ENCODE measurements at regions of chr3 and their contacts with region 1.

Region 1: DNA sequence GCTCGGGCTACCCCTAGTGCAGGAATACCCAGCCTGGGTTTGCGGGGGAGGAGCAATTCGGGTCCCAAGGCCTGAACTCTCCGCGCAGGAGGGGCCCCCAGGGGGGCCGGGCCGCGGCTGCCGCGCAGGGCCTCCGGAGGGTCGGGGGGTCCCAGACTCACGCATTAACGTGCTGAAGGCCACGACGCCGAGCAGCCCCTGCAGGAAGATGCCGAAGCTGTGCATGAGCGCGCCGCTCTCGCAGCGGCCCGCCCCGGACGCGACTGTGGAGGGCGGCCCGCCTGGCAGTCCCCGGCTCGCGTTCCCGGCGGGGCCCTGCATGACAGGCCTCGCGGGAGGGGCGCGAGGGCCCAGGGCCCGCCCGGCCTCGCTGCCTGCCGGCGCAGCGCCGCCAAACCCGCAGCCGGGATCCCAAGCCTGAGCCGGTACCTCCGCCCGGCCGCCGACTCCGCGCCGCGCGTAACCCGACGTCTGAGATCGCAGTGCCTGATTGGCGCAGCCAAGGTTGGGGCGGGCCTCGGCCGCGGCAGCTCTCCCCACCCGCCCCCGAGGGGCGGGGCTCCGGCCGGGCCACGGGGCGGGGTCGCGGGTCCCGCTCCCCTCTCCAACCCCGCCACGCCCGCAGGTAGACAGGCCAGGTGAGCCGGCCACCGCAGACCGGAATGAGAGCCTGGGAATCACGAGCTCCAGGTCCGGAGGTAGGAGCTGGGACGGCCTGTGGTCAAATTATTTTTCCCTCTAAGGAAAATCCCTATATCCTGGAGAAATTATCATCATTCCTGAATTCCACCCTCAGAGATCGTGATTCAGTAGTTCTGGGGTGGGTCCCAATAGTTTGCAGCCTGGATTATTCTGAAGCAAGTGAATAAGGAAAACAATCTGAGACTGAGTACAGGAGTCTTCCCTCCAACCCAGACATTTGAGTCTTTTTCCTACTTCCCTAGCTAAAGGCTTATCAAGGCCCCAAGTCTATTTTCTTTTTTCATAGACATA is at the start of gene STIMATE:
- DNase-seq: peak; percentile 71 to 94 (median 86)
- ATAC-seq: peak; percentile 93
- H3K4me3 ChIP-seq: peak within 1 kb of the TSS; percentile 70 to 85
- H3K4me3 Mint-ChIP-seq: peak within 1 kb of the TSS; percentile 90
- H3K27ac ChIP-seq: peak within 1 kb of the TSS; percentile 23 to 49
- H3K27ac Mint-ChIP-seq: peak within 1 kb of the TSS; percentile 80
- H3K4me1 ChIP-seq: peaks cover 22% of the 10 kb centered on the region
- H3K4me1 Mint-ChIP-seq: peaks cover 48% of the 10 kb centered on the region
- H3K27me3 ChIP-seq: no peaks in the 10 kb centered on the region
- H3K27me3 Mint-ChIP-seq: no peaks in the 10 kb centered on the region
- CTCF ChIP-seq: no peak
- total RNA-seq, gene STIMATE: 29.1 to 35.9 TPM

Region 2: GRCh38 chr3:52770496-52771333 is 126.7 kb before region 1 on chr3 and contains the start of gene NEK4:
- CTCF ChIA-PET with region 1: no interaction called
- POLR2A ChIA-PET with region 1: interaction called, 6 read pairs
- intact Hi-C with region 1: loop called in 1 of 2 experiments (anchors 10 kb)
- DNase-seq: peak; percentile 49 to 92 (median 84)
- ATAC-seq: peak; percentile 89
- H3K4me3 ChIP-seq: peak within 1 kb of the TSS; percentile 60 to 81
- H3K4me3 Mint-ChIP-seq: peak within 1 kb of the TSS; percentile 98
- H3K27ac ChIP-seq: peak within 1 kb of the TSS; percentile 42 to 68
- H3K27ac Mint-ChIP-seq: peak within 1 kb of the TSS; percentile 93
- H3K4me1 ChIP-seq: peaks cover 9% of the 10 kb centered on the region
- H3K4me1 Mint-ChIP-seq: peaks cover 19% of the 10 kb centered on the region
- H3K27me3 ChIP-seq: no peaks in the 10 kb centered on the region
- H3K27me3 Mint-ChIP-seq: no peaks in the 10 kb centered on the region
- CTCF ChIP-seq: no peak
- total RNA-seq, gene NEK4: 5.1 to 5.6 TPM

Region 3: DNA sequence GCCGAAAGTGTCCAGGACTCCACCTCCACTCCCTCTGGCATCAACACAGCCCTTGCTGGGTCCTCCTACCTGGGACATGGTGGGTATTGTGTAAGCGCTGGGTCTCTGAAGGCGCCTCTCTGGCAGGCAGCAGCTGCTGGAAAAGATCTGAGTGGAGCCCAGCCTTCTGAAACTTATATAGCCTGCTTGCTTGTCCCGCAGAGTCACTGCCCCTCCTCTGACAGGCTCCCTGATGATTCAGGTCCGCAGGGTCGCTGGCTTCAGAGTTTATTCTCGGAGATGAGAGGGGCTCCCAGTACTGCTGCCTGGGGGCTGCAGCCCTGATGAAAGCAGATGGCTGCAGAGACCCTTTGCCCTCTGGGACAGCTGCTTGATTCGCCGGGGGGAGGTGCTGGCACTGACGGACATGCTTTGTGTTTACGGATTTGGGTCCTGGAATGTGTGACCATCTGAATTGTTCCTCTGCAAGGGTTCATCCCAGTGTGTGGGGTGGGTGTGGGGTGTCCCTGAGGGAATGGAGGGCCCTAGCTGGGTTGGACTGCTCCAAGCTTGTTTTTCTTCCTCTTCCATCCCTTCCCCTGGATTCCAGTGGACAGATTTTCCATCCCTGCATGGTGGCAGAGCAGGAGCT is 62.4 kb before region 1 on chr3 and contains the start of gene MUSTN1:
- CTCF ChIA-PET with region 1: no interaction called
- POLR2A ChIA-PET with region 1: no interaction called
- intact Hi-C with region 1: no loop called
- DNase-seq: no peak
- ATAC-seq: no peak
- H3K4me3 ChIP-seq: no peak within 1 kb of the TSS
- H3K4me3 Mint-ChIP-seq: no peak within 1 kb of the TSS
- H3K27ac ChIP-seq: no peak within 1 kb of the TSS
- H3K27ac Mint-ChIP-seq: no peak within 1 kb of the TSS
- H3K4me1 ChIP-seq: peaks cover 21% of the 10 kb centered on the region
- H3K4me1 Mint-ChIP-seq: peaks cover 25% of the 10 kb centered on the region
- H3K27me3 ChIP-seq: no peaks in the 10 kb centered on the region
- H3K27me3 Mint-ChIP-seq: no peaks in the 10 kb centered on the region
- CTCF ChIP-seq: no peak
- total RNA-seq, gene MUSTN1: 3.4 to 6.7 TPM

Region 4: DNA sequence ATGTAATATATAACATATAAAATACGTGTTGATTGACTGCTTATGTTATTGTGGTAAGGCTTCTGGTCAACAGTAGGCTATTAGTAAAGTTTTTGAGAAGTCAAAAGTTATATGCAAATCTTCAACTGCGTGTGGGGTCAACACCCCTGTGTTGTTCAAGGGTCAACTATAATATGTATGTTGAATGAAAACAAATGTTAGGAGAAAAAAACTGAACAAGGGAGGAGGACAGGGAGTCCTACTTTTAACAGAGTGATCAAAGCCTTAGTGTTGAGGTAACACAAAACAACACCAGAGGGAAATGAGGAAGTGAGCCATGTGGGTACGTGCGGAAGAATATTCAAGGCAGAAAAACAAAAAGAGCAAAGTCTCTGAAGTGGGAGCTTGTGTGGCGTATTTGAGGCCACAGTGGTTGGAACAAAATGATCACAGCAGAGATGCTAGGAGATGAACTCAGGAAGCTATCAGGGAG is 85.9 kb after region 1 on chr3:
- CTCF ChIA-PET with region 1: no interaction called
- POLR2A ChIA-PET with region 1: interaction called, 4 read pairs
- intact Hi-C with region 1: loop called in 1 of 2 experiments (anchors 1 kb)
- DNase-seq: peak; percentile 10 to 84 (median 58)
- ATAC-seq: peak; percentile 86
- H3K4me3 ChIP-seq: no peak overlapping the region
- H3K4me3 Mint-ChIP-seq: peak overlapping the region; percentile 68
- H3K27ac ChIP-seq: peak overlapping the region; percentile 26 to 66
- H3K27ac Mint-ChIP-seq: peak overlapping the region; percentile 87
- H3K4me1 ChIP-seq: peaks cover 38% of the 10 kb centered on the region
- H3K4me1 Mint-ChIP-seq: peaks cover 46% of the 10 kb centered on the region
- H3K27me3 ChIP-seq: no peaks in the 10 kb centered on the region
- H3K27me3 Mint-ChIP-seq: no peaks in the 10 kb centered on the region
- CTCF ChIP-seq: no peak

Region 5: DNA sequence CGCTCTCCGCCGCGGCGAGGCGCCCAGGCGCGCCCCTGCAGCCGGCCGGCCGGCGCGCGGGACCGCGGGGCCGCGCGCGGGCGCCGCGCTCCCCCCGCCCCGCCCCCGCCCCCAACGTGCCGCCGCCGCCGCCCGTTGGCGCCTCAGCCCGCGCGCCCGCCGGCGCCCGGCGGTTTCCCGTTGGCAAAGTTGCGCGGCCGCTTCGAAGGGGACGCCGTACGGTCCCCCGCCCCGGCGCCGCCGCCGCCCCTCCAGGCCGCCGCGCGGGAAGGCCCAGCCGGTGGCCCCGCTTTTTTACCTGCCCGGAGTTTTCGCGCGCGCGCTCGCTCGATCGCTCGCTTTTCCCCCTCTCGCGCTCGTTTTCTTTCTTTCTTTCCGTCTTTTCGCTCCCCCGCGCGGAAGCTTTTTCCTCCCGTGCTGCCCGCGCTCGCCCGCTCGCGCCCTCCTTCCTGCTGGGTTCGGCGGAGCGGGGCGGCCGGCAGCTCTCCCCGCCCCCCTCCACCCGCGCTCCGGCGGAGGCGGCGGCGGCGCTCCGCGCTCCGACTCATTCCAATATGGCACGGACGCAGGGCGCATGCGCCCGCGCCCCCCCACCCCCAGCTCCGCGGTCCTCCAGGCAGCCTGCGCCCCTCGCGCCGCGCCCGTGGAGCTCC is 148.2 kb after region 1 on chr3 and contains the start of gene SFMBT1:
- CTCF ChIA-PET with region 1: interaction called, 3 read pairs
- POLR2A ChIA-PET with region 1: no interaction called
- intact Hi-C with region 1: loop called (anchors 1 to 2 kb)
- DNase-seq: peak; percentile 52 to 91 (median 78)
- ATAC-seq: peak; percentile 49
- H3K4me3 ChIP-seq: peak within 1 kb of the TSS; percentile 85 to 88
- H3K4me3 Mint-ChIP-seq: peak within 1 kb of the TSS; percentile 98
- H3K27ac ChIP-seq: peak within 1 kb of the TSS; percentile 81 to 83
- H3K27ac Mint-ChIP-seq: peak within 1 kb of the TSS; percentile 99
- H3K4me1 ChIP-seq: peaks cover 37% of the 10 kb centered on the region
- H3K4me1 Mint-ChIP-seq: peaks cover 35% of the 10 kb centered on the region
- H3K27me3 ChIP-seq: no peaks in the 10 kb centered on the region
- H3K27me3 Mint-ChIP-seq: no peaks in the 10 kb centered on the region
- CTCF ChIP-seq: no peak
- total RNA-seq, gene SFMBT1: 23.6 to 26.2 TPM

Region 6: DNA sequence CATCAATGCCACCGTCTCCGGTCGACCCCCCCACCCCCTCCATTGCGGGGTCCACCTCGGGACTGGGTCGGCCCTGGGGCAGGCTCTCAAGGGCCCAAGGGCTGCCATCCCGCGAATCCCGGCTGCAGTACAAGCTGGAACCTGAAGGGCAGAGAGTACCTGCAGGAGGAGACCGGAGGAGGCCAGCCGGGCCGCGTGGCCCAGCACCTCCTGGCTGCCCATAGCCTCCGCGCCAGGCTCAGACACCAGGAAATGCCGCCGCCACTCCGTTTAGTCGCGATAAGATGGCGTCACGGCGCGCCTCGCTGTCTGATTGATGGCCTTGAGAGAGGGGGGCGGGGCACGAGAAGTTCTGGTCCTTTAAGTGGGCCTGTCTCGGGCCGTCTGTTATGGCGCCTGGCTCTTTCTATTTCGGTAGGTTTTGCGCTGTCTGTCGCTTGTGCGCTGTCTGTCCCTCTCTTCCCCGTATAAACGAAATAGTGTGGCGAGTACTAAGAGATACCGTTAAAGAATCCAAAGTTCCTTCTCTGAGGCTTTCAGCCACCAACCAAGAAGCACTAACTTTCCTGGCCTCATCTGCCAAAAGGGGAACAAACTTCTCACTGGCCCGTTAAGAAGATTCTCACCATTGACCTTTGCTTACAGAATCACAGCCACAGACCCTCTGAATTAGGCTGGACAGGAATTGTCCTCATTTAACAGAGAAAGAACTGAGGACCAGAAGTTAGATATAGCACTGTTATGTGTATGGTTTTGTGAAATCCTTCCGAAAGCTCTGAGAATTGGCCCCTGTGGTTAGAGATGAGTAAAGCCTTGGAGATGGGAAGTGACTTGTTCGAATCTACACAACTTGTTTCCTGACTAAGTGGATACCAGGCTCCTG is 233.0 kb after region 1 on chr3 and contains the start of gene RFT1:
- CTCF ChIA-PET with region 1: no interaction called
- POLR2A ChIA-PET with region 1: no interaction called
- intact Hi-C with region 1: loop called in 1 of 2 experiments (anchors 1 kb)
- DNase-seq: peak; percentile 95 to 99 (median 99)
- ATAC-seq: peak; percentile 92
- H3K4me3 ChIP-seq: peak within 1 kb of the TSS; percentile 90 to 93
- H3K4me3 Mint-ChIP-seq: peak within 1 kb of the TSS; percentile 91
- H3K27ac ChIP-seq: peak within 1 kb of the TSS; percentile 89 to 98
- H3K27ac Mint-ChIP-seq: peak within 1 kb of the TSS; percentile 99
- H3K4me1 ChIP-seq: peaks cover 21% of the 10 kb centered on the region
- H3K4me1 Mint-ChIP-seq: peaks cover 37% of the 10 kb centered on the region
- H3K27me3 ChIP-seq: no peaks in the 10 kb centered on the region
- H3K27me3 Mint-ChIP-seq: no peaks in the 10 kb centered on the region
- CTCF ChIP-seq: no peak
- total RNA-seq, gene RFT1: 6.6 to 7.0 TPM

Region 7: DNA sequence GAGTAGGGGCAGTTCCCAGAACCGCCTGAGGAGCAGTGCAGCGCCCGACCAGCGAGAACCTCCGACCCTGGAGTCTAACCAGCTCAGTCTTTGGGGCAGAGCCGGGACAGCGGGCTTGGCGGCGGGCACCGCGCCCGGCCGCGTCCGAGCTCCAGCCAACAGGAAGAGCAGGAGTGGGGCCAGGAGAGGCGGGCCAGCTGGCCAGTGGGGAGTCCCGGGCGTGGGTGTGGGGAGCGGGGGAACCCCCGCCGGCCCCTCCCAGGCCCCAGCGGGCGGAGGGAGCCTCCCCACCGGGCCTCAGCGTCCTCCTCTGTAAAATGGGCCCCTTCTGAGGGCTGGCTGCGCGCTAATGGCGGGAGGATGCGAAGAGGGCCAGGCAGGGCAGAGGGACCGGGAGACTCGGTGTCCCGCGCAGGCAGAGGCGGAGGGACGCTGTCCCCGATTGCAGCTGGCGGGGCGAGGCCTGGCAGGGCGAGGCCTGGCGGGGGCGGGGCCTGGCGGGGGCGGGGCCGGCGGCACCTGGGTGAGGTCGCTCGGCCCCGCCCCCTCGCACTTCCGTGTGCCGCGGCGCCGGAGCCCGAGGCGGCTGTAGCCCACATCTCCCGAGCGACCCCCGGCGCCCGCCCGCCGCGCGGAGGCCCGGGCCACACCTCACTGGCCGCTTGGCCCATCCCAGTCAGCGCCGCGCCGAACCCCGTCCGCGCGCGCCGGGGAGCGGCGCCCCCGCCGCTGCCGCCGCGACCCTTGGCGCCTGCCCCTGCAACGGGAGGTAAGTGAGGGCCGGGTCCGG is 263.4 kb after region 1 on chr3 and contains the start of gene PRKCD:
- CTCF ChIA-PET with region 1: no interaction called
- POLR2A ChIA-PET with region 1: no interaction called
- intact Hi-C with region 1: loop called (anchors 2 kb)
- DNase-seq: peak; percentile 60 to 90 (median 79)
- ATAC-seq: peak; percentile 75
- H3K4me3 ChIP-seq: peak within 1 kb of the TSS; percentile 85 to 96
- H3K4me3 Mint-ChIP-seq: peak within 1 kb of the TSS; percentile 87
- H3K27ac ChIP-seq: peak within 1 kb of the TSS; percentile 50 to 53
- H3K27ac Mint-ChIP-seq: peak within 1 kb of the TSS; percentile 85
- H3K4me1 ChIP-seq: peaks cover 29% of the 10 kb centered on the region
- H3K4me1 Mint-ChIP-seq: peaks cover 24% of the 10 kb centered on the region
- H3K27me3 ChIP-seq: peaks cover under 1 to 3% of the 10 kb centered on the region in 2 experiments
- H3K27me3 Mint-ChIP-seq: peaks cover 14% of the 10 kb centered on the region
- CTCF ChIP-seq: peak; percentile 11
- total RNA-seq, gene PRKCD: 19.6 to 20.7 TPM

Region 8: GRCh38 chr3:53881691-53882593 is 984.5 kb after region 1 on chr3 and contains the start of gene ACTR8:
- CTCF ChIA-PET with region 1: no interaction called
- POLR2A ChIA-PET with region 1: no interaction called
- intact Hi-C with region 1: loop called in 1 of 2 experiments (anchors 5 kb)
- DNase-seq: peak; percentile 72 to 90 (median 85)
- ATAC-seq: peak; percentile 86
- H3K4me3 ChIP-seq: peak within 1 kb of the TSS; percentile 79 to 88
- H3K4me3 Mint-ChIP-seq: peak within 1 kb of the TSS; percentile 97
- H3K27ac ChIP-seq: peak within 1 kb of the TSS; percentile 76 to 81
- H3K27ac Mint-ChIP-seq: peak within 1 kb of the TSS; percentile 97
- H3K4me1 ChIP-seq: peaks cover 28% of the 10 kb centered on the region
- H3K4me1 Mint-ChIP-seq: peaks cover 35% of the 10 kb centered on the region
- H3K27me3 ChIP-seq: no peaks in the 10 kb centered on the region
- H3K27me3 Mint-ChIP-seq: no peaks in the 10 kb centered on the region
- CTCF ChIP-seq: no peak
- total RNA-seq, gene ACTR8: 20.3 to 23.7 TPM